ENCODE measurements at regions of chr17 and their contacts with region 1.

Region 1: DNA sequence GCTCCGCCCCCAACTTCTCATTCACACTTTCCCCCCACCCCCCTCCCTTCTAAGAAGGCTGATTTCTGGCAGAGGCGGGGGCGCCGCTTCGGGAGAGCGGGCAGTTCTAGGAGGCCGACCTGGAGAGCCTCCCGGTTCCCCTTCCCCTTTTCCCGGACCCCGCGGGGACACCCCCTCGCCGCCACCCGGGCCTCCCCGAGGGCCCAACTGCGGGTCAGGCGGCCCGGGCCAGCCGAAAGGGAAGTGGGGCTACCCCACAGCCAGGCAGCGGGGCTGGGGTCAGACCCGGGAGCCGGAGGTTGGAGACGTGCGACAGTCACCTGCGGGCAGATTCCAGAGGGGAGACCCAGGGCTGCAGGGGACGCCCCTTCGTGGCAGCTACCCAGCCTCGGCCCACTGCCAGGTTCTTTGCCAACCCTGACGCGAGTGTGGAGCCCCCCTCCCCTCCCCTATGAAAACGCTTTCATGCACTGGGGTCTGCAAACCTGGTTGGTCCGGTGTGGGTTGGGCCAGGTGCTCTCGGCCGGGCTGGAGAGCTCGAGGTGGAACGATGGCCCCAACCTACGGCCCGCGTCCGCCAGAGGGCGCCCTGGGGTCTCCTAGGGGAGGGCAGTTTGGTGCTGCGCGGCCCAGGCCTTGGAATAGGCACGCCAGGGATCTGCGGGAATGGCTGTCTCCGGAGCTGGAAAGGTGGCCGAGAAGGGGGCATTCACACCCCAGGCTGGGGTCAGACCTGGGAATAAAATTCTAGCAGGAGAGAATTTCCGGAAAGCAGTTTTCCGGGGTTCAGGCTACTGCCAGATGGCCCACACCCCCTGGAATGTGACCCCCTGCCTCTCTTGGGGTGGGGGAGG is 721 bp upstream of the SOCS3 start:
- DNase-seq: peak; percentile 84
- H3K4me3 ChIP-seq: peak overlapping the region; percentile 28 to 46 (median 39)
- H3K27ac ChIP-seq: peak overlapping the region; percentile 54
- H3K4me1 ChIP-seq: peaks cover 36% of the 10 kb centered on the region
- H3K27me3 ChIP-seq: no peaks in the 10 kb centered on the region
- CTCF ChIP-seq: peak; percentile 90 to 98
- POLR2A ChIP-seq: no peak

Region 2: DNA sequence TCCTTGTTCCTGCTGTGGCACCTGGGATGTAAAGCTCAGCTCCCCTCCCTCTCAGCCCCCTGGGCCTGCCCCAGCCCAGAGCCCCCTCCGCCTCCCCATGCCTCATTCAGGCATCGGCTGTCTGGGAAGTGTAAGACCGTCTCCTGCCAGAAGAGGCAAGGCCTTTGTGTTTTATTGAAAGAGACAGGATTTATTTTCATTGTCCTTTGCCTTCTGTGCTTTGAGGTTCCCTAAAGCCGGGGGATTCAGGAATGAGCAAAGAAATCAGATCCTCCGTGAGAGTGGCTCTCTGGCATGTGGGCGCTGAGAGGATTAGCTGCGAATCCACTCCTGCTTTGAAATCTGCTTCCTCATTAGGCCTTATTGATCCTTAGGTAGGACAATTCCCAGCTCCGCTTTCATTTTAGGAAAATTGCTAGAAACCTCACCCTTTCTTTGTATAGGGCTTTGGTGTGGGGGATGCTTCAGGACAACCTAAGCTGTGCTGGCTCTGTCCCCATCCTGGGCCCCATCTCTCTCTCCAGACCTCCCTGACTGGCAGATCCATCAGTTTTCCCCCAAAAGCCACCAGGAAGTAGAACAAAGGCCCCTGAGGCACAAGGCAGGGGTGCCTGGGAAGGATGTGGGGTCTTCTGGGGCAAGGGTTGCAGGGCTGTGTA is 613.6 kb before region 1 on chr17:
- CTCF ChIA-PET with region 1: no interaction called
- POLR2A ChIA-PET with region 1: no interaction called
- dilution Hi-C with region 1: no loop called
- intact Hi-C with region 1: no loop called
- DNase-seq: no peak
- H3K4me3 ChIP-seq: no peak overlapping the region
- H3K27ac ChIP-seq: no peak overlapping the region
- H3K4me1 ChIP-seq: no peaks in the 10 kb centered on the region
- H3K27me3 ChIP-seq: no peaks in the 10 kb centered on the region
- CTCF ChIP-seq: no peak
- POLR2A ChIP-seq: no peak

Region 3: DNA sequence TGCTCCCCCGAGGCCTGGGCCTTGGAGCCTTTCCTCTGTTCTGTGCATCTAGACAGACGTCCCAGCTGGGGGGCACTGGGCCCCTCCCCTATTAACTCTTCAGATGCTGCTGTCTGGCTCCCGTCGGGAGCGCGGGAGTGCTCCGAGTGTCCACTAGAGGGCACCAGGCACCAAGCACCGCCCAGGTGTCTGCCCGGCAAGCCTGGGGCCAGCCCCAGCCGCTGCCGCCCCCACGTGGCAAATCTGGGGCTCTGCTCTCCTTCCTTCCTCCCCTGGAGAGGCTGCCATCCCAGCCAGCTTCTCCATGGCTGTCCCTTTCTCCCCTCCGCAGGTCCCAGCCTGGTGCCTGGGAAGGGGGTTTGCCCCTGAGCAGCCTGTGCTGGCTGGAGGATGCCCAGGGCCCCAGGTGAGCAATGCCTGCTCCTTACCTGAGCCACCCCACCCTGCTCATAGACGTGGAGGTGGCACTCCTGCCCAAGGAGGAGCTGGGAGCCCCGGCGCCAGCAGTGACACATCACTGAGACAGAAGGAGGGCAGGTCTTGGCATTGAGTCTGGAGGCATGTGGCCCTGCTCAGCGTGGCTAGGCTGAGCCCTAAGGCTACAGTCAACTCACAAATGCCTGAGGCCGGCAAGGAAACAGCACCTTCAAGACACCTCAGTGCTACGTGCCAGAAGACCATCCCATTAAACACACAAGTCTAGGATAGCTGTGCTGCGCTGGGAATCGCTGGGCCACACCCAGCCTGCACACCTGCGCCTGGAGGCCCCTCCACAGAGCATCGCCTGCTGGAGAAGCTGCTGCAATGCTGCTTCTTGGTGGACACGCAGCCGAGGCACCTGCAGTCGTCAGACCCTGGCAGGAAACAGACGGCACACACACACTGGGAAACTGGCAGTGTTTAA is 109.5 kb before region 1 on chr17:
- CTCF ChIA-PET with region 1: interaction called, 32 read pairs
- POLR2A ChIA-PET with region 1: interaction called, 3 read pairs
- dilution Hi-C with region 1: no loop called
- intact Hi-C with region 1: loop called (anchors 1 kb)
- DNase-seq: peak; percentile 78
- H3K4me3 ChIP-seq: no peak overlapping the region
- H3K27ac ChIP-seq: no peak overlapping the region
- H3K4me1 ChIP-seq: peaks cover 4% of the 10 kb centered on the region
- H3K27me3 ChIP-seq: no peaks in the 10 kb centered on the region
- CTCF ChIP-seq: peak; percentile 99 to 100
- POLR2A ChIP-seq: no peak

Region 4: GRCh38 chr17:78313735-78314648 is 46.6 kb before region 1 on chr17:
- CTCF ChIA-PET with region 1: interaction called, 16 read pairs
- POLR2A ChIA-PET with region 1: interaction called, 5 read pairs
- dilution Hi-C with region 1: no loop called
- intact Hi-C with region 1: loop called (anchors 1 kb)
- DNase-seq: peak; percentile 65
- H3K4me3 ChIP-seq: peak overlapping the region in 2 of 3 experiments; percentile 32 to 38
- H3K27ac ChIP-seq: peak overlapping the region; percentile 10
- H3K4me1 ChIP-seq: peaks cover 29% of the 10 kb centered on the region
- H3K27me3 ChIP-seq: no peaks in the 10 kb centered on the region
- CTCF ChIP-seq: no peak
- POLR2A ChIP-seq: peak; percentile 54

Region 5: DNA sequence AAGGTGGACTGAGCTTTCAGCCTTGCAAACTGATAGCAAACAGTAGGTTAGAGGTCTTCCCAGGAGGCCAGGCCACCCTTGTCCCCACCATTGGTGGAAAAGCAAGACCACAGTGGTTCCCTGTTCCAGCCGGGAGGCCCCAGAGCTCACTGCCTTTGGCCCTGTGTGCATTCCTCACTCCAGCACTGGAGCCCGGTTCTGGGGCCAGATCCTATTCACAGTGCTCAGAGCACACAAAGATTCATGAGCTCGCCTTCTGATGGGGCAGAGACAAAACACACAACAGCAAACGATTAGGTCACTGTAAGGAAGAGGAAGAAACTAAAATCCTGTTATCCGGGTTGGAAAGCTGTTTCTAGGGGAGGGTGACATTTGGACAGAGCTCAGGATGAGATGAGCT is 12.2 kb after region 1 on chr17:
- CTCF ChIA-PET with region 1: interaction called, 36 read pairs
- POLR2A ChIA-PET with region 1: interaction called, 6 read pairs
- dilution Hi-C with region 1: no loop called
- intact Hi-C with region 1: loop called (anchors 1 kb)
- DNase-seq: no peak
- H3K4me3 ChIP-seq: no peak overlapping the region
- H3K27ac ChIP-seq: no peak overlapping the region
- H3K4me1 ChIP-seq: peaks cover 24% of the 10 kb centered on the region
- H3K27me3 ChIP-seq: no peaks in the 10 kb centered on the region
- CTCF ChIP-seq: no peak
- POLR2A ChIP-seq: no peak

Region 6: DNA sequence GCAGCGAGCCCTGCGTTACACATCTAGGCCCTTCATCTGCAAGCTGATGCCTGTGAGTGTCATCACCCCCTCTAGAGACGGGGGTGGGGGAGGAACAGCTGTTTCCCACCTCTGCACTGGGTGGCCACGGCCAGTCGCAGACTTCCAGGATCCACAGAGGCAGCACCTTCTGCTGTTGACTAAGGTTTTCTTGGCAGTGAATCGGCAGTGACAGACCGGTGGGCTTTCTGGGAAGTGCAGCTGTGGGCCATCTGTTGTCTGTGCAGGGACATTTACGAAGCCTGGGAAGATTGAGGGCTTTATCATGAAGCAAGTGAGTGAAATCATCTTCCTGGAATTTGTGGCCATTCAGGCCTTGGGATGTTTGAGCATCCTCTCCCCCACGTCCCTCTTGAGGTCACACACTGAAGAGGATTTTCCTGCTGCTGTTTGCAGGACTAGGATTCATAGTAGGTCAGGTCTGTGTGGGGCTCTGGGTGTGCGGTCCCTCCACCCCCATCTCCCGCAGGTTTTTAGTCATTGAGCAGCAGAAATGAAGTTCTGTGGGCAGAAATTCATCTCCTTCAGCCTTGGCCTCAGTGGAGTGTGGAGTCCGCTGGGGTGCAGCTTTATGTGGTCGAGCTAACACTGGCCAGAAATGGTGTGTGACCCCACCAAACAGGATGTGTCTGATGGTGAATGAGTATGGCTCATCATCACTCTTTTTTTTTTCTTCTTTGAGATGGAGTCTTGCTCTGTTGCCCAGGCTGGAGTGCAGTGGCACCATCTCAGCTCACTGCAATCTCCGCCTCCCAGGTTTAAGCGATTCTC is 29.8 kb after region 1 on chr17:
- CTCF ChIA-PET with region 1: interaction called, 21 read pairs
- POLR2A ChIA-PET with region 1: interaction called, 3 read pairs
- dilution Hi-C with region 1: no loop called
- intact Hi-C with region 1: no loop called
- DNase-seq: no peak
- H3K4me3 ChIP-seq: no peak overlapping the region
- H3K27ac ChIP-seq: peak overlapping the region; percentile 59
- H3K4me1 ChIP-seq: peaks cover 61% of the 10 kb centered on the region
- H3K27me3 ChIP-seq: no peaks in the 10 kb centered on the region
- CTCF ChIP-seq: peak in 1 of 2 donors; percentile 16
- POLR2A ChIP-seq: no peak

Region 7: DNA sequence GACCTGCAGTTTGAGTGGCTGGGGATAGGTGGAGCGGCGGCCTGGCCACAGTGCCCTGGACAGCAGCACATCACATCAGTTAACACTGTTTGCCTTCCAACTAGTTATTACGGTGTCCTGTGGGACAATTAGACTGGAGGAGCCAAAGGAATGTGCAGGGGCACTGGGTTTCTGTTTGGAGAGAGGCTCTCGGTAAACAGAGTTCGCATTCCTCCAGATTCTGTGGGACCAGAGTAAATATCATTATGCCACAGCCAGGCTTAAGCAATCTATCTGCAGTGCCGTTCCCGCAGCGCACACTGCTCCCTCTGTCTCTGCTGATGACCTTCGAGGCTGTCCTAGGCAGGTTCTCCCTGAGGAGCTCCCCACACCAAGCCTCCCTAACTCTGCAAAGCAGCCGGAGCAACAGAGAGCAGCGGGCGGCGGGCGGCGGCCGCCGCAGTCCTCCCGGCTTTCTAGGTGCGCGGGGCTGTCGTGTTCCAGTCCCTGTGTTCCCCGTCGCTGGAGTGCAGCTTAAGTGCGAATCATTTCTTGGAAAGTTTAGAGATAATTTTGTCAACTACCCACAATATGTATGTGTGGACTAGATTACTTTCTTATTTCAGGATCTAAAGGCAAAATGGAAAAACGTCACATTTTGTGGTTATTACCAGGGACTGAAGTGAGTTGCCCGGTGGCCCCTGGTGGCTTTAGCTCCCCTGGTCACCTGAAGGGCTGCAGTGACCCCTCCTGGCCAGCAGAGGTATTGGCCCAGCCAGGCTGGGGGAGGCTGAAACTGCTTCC is 61.1 kb after region 1 on chr17:
- CTCF ChIA-PET with region 1: interaction called, 184 read pairs
- POLR2A ChIA-PET with region 1: interaction called, 11 read pairs
- dilution Hi-C with region 1: no loop called
- intact Hi-C with region 1: loop called (anchors 1 kb)
- DNase-seq: peak; percentile 77
- H3K4me3 ChIP-seq: no peak overlapping the region
- H3K27ac ChIP-seq: no peak overlapping the region
- H3K4me1 ChIP-seq: peaks cover 9% of the 10 kb centered on the region
- H3K27me3 ChIP-seq: no peaks in the 10 kb centered on the region
- CTCF ChIP-seq: peak; percentile 97 to 98
- POLR2A ChIP-seq: no peak

Measured in endothelial cell of umbilical vein (primary cell).